Activated CD4-positive, alpha-beta memory T cell treated with anti-CD3 and anti-CD28 coated beads for 36 hours (primary cell): ENCODE measurements at regions of chr21 and their contacts with region 1.

Region 1: DNA sequence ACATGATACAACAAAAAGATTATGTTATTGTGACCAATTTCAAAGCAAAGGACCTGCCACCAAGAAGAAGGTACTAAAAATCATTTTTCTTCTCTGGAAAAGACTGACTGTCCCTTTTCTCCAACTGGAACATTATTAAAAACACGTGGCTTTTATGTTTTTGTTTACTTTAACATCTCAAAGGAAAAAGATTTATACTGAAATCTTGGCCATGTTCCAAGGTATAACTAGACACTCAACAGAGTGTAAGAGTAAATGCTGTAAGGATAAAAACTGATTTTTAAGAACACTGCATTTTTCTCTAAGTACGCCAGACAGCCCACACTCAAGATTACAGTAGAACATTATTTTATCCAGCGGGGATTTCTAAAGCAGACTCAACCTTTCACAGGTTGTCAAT is 62.1 kb downstream of the BRWD1 start:
- DNase-seq: no peak
- H3K4me3 Mint-ChIP-seq: no peak overlapping the region
- H3K27ac Mint-ChIP-seq: no peak overlapping the region
- H3K4me1 Mint-ChIP-seq: no peaks in the 10 kb centered on the region
- H3K27me3 Mint-ChIP-seq: no peaks in the 10 kb centered on the region

Region 2: GRCh38 chr21:39204134-39204533 is 47.2 kb before region 1 on chr21:
- CTCF ChIA-PET with region 1: no interaction called
- POLR2A ChIA-PET with region 1: no interaction called
- intact Hi-C with region 1: loop called (anchors 5 kb)
- DNase-seq: no peak
- H3K4me3 Mint-ChIP-seq: no peak overlapping the region
- H3K27ac Mint-ChIP-seq: no peak overlapping the region
- H3K4me1 Mint-ChIP-seq: peaks cover 10% of the 10 kb centered on the region
- H3K27me3 Mint-ChIP-seq: no peaks in the 10 kb centered on the region

Region 3: DNA sequence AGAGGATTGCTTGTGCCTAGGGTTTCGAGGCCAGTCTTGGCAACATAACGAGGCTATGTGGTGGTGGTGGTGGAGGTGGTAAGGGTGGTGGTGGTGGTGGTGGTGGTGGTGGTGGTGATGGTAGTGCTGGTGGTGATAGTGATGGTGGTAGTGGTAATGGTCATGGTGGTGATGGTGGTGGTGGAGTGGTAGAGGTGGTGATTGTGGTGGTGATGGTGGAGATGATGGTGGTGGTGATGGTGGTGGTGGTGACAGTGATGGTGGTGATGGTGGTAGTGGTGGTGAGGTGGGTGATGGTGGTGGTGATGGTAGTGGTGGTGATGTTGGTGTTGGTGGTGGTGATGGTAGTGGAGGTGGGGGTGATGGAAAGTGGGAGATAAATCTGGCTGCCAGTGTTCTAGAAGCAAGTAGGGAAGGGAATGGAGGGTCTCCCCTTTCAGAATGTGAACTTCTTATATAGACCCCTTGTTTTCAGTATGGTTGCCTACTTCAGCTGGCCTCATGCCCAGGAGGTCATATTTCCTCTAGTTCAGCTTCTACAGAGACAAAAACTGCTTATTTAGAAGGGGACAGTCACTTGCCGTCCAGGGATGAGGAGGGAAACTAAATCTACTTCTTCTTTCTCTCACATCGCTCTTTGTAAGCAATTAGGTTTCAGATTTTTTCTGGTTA is 228.0 kb after region 1 on chr21:
- CTCF ChIA-PET with region 1: no interaction called
- POLR2A ChIA-PET with region 1: no interaction called
- intact Hi-C with region 1: no loop called
- DNase-seq: no peak
- H3K4me3 Mint-ChIP-seq: no peak overlapping the region
- H3K27ac Mint-ChIP-seq: no peak overlapping the region
- H3K4me1 Mint-ChIP-seq: no peaks in the 10 kb centered on the region
- H3K27me3 Mint-ChIP-seq: no peaks in the 10 kb centered on the region